ENCODE measurements at regions of chr16 and their contacts with region 1.

Region 1: DNA sequence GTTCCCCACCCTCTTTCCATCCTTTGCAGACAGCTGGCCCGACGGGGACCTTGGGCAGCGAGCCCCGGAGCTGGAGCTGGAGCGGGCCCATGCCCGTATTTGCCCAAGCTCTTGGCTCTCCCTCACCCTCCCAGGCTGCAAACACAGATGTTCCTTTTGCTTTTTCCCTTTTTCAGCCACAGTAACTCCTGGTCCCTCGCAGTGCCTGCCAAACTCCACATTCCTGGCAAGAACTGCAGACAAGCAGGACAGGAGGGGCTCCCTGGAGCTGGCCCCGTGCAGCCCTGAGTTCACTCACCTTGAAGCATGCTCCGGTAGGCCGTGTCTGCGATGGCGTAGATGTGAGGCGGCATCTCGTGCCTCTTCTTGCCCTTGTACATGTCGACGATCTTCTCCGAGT is 33.9 kb downstream of the MYH11 start:
- DNase-seq: no peak
- H3K27ac ChIP-seq: no peak overlapping the region; the same call in 1 of the 2 replicates
- CTCF ChIP-seq: no peak

Region 2: DNA sequence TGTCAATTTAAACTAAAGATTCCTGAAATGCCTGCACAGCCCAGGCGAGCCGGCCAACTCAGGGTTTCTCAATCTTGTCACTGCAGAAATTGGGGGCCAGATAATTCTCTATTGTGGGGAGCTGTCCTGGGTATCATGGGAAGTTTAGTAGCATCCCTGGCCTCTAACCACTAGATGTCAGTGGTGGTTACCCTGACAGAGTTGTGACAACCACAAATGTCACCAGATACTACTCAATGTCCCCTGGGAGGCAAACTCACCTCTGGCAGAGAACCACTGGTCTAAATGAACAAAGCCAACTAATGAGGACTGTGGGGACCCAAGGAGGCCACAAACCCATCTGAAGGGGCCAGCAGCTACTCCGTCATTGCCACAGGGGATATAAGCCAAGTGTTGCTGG is 57.1 kb before region 1 on chr16:
- CTCF ChIA-PET with region 1: interaction called, 16 read pairs
- POLR2A ChIA-PET with region 1: no interaction called
- DNase-seq: peak; percentile 44
- H3K27ac ChIP-seq: no peak overlapping the region
- CTCF ChIP-seq: peak; percentile 62

Region 3: GRCh38 chr16:16021988-16022682 is 199.2 kb after region 1 on chr16:
- CTCF ChIA-PET with region 1: no interaction called
- POLR2A ChIA-PET with region 1: no interaction called
- DNase-seq: peak; percentile 98
- H3K27ac ChIP-seq: peak overlapping the region; percentile 86
- CTCF ChIP-seq: no peak